Panc1 (cell line): ENCODE measurements at regions of chr22 and their contacts with region 1.

Region 1: GRCh38 chr22:44625981-44626687 is 75.9 kb upstream of the PRR5 start:
- DNase-seq: peak; percentile 33
- ATAC-seq: peak; percentile 74
- H3K4me3 ChIP-seq: no peak overlapping the region
- H3K27ac ChIP-seq: no peak overlapping the region
- H3K4me1 ChIP-seq: peaks cover 3% of the 10 kb centered on the region; the same call in 1 of the 2 replicates
- H3K27me3 ChIP-seq: no peaks in the 10 kb centered on the region
- CTCF ChIP-seq: peak; percentile 87

Region 2: DNA sequence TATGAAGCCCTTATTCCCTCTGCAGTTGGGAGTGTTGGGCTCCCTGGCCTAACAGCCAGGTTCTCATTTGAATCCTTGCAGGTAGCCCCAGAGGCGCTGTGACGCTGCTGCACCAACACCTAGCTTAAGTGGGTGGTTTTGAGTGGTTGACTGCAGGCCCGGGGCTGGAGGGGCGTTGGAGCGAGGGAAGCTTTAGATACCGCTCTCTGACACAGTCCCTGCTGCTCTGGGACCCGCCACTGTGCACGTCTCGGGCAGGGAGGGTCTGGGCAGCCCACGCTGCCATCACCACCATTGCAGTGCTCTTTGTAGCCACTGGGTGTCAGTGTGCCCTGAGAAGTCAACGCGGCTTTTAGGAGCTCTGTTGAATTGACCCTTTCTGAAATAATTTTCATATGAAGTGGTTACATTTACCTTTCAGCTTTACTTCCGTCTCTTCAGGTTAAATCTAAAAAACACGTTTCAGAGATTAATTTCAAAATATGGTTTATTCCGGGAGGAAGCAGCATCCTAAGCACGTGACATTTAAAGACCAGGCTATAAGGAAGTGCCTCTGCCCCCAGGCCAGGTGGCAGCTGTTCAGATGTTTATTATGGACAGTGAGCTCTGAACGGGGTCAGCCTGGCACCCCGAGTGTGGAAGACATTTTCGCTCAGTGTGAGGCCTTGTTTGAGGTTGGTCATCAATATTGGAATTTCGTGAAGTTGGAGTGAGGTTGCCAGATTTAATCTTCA is 632.9 kb before region 1 on chr22:
- CTCF ChIA-PET with region 1: interaction called, 5 read pairs
- POLR2A ChIA-PET with region 1: no interaction called
- in situ Hi-C with region 1: no loop called
- intact Hi-C with region 1: loop called (anchors 5 kb)
- DNase-seq: peak; percentile 46
- ATAC-seq: peak; percentile 77
- H3K4me3 ChIP-seq: no peak overlapping the region
- H3K27ac ChIP-seq: no peak overlapping the region
- H3K4me1 ChIP-seq: no peaks in the 10 kb centered on the region
- H3K27me3 ChIP-seq: no peaks in the 10 kb centered on the region
- CTCF ChIP-seq: peak; percentile 88

Region 3: GRCh38 chr22:44080936-44081861 is 544.9 kb before region 1 on chr22:
- CTCF ChIA-PET with region 1: interaction called, 4 read pairs
- POLR2A ChIA-PET with region 1: no interaction called
- in situ Hi-C with region 1: no loop called
- intact Hi-C with region 1: loop called (anchors 10 kb)
- DNase-seq: peak; percentile 43
- ATAC-seq: peak; percentile 77; the same call in 1 of the 2 replicates
- H3K4me3 ChIP-seq: no peak overlapping the region
- H3K27ac ChIP-seq: no peak overlapping the region
- H3K4me1 ChIP-seq: no peaks in the 10 kb centered on the region
- H3K27me3 ChIP-seq: no peaks in the 10 kb centered on the region
- CTCF ChIP-seq: peak; percentile 91

Region 4: GRCh38 chr22:44341816-44342648 is 284.1 kb before region 1 on chr22:
- CTCF ChIA-PET with region 1: no interaction called
- POLR2A ChIA-PET with region 1: no interaction called
- in situ Hi-C with region 1: no loop called
- intact Hi-C with region 1: loop called (anchors 10 kb)
- DNase-seq: no peak
- ATAC-seq: peak; percentile 55; the same call in 1 of the 2 replicates
- H3K4me3 ChIP-seq: no peak overlapping the region
- H3K27ac ChIP-seq: no peak overlapping the region; the same call in 1 of the 2 replicates
- H3K4me1 ChIP-seq: peaks cover 4% of the 10 kb centered on the region
- H3K27me3 ChIP-seq: no peaks in the 10 kb centered on the region; the same call in 1 of the 2 replicates
- CTCF ChIP-seq: no peak

Region 5: GRCh38 chr22:44595841-44596341 is 30.2 kb before region 1 on chr22:
- CTCF ChIA-PET with region 1: no interaction called
- POLR2A ChIA-PET with region 1: no interaction called
- in situ Hi-C with region 1: no loop called
- intact Hi-C with region 1: no loop called
- DNase-seq: no peak
- ATAC-seq: no peak
- H3K4me3 ChIP-seq: no peak overlapping the region
- H3K27ac ChIP-seq: no peak overlapping the region
- H3K4me1 ChIP-seq: no peaks in the 10 kb centered on the region
- H3K27me3 ChIP-seq: no peaks in the 10 kb centered on the region
- CTCF ChIP-seq: no peak

Region 6: GRCh38 chr22:44758346-44758973 is 132.3 kb after region 1 on chr22:
- CTCF ChIA-PET with region 1: no interaction called
- POLR2A ChIA-PET with region 1: no interaction called
- in situ Hi-C with region 1: no loop called
- intact Hi-C with region 1: no loop called
- DNase-seq: no peak
- ATAC-seq: no peak
- H3K4me3 ChIP-seq: no peak overlapping the region
- H3K27ac ChIP-seq: no peak overlapping the region
- H3K4me1 ChIP-seq: peaks cover 13% of the 10 kb centered on the region
- H3K27me3 ChIP-seq: no peaks in the 10 kb centered on the region
- CTCF ChIP-seq: no peak